K562 (cell line): ENCODE measurements at regions of chr12 and their contacts with region 1.

Region 1: DNA sequence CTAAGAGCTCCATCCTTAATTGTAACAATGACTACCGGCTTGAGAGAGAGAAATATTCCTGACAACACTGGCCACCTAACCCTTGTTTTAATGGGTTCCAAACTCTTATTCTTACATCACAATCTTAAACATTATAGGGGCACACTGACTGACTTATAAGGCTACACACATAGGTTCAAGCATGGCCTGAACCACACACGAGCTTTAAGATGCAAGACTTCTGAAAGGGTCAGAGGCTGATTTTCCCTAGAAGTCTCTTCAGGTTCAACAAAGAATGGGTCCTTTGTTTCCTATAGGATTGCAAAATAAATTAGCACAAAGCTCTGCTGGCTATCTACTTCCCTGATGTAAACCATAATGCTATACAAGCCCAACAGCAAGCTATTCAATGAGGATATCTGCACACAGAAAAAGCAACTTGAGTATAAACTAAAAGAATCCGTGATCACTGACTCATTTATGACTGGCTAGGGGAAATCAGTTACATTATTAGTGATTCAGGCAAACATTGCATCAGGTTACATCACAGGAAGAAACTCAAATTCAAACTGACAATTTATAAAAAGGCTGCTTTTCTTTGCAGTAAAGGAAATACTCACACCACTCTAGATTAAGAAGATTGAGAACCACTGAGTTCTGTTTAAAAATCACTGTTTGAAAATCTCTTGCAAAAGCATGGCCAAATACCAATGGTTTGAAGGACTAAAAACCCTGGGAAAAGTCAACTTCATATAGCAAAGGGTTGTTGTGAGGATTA is 8.5 kb downstream of the BTG1 start:
- DNase-seq: no peak
- ATAC-seq: no peak
- H3K4me3 ChIP-seq: no peak overlapping the region
- H3K27ac ChIP-seq: no peak overlapping the region
- H3K4me1 ChIP-seq: peaks cover 0 to 44% of the 10 kb centered on the region in 2 experiments; a peak in 4 of 5 replicates
- H3K27me3 ChIP-seq: no peaks in the 10 kb centered on the region
- CTCF ChIP-seq: no peak
- EP300 ChIP-seq: peak; percentile 59; the same call in 1 of the 2 replicates
- POLR2A ChIP-seq: no peak
- RAD21 ChIP-seq: no peak

Region 2: GRCh38 chr12:92002673-92003382 is 134.3 kb before region 1 on chr12:
- CTCF ChIA-PET with region 1: no interaction called
- POLR2A ChIA-PET with region 1: no interaction called
- in situ Hi-C with region 1: no loop called
- intact Hi-C with region 1: loop called (anchors 1 kb)
- DNase-seq: peak; percentile 15 to 78 (median 43)
- ATAC-seq: peak; percentile 85
- H3K4me3 ChIP-seq: no peak overlapping the region
- H3K27ac ChIP-seq: peak overlapping the region; percentile 65
- H3K4me1 ChIP-seq: peaks cover 4 to 31% of the 10 kb centered on the region in 2 experiments; a peak in 4 of 5 replicates
- H3K27me3 ChIP-seq: no peaks in the 10 kb centered on the region
- CTCF ChIP-seq: no peak
- EP300 ChIP-seq: peak; percentile 86; the same call in 1 of the 2 replicates
- POLR2A ChIP-seq: no peak
- RAD21 ChIP-seq: 0 out of 4 replicates have a peak, but pooled peaks of 1 of the 2 experiments have one; percentile 13

Region 3: DNA sequence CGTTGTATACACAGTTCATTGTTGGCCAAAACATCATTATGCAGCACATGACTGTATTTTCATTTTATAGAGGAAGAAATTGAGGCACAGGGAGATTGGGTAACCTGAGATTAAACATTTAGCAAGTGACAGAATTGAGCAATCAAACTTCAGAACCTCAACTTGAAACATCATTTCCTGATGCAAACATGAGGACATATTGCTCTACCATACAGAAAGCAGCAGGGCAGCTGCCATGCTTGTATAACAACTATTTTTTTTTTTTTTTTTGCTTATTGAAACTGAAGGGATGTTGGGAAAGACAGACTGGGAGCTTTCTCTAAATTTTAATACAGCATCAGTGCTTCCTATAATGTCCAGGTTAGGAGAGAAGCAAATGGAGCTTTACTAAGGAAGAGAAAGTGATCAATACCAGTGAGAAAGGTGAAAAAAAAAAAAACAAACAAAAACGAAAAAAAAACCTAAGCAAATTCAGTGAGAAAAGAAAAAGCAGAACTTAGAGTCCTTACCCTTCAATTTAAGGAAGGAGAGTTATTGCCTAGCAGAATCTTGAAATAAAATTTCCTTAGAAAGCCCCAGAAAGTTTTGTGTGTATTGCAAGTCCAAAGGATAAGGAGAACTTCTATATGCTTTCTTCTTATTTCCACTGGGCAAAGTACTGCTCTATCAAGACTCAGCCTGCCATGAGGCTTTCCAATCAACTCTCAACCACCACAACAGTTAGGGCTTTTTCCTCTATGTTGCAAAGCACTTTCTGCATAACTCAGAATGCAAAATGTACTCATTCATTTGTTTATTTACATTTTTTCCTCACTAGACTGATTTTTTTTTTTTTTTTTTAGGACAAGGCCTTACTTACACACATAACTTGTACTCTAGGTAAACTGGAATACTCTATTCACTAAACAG is 13.1 kb before region 1 on chr12:
- CTCF ChIA-PET with region 1: no interaction called
- POLR2A ChIA-PET with region 1: interaction called, 14 read pairs
- in situ Hi-C with region 1: no loop called
- intact Hi-C with region 1: no loop called
- DNase-seq: no peak
- ATAC-seq: no peak
- H3K4me3 ChIP-seq: no peak overlapping the region
- H3K27ac ChIP-seq: no peak overlapping the region
- H3K4me1 ChIP-seq: peaks cover 0 to 8% of the 10 kb centered on the region in 2 experiments; a peak in 2 of 5 replicates
- H3K27me3 ChIP-seq: no peaks in the 10 kb centered on the region
- CTCF ChIP-seq: no peak
- EP300 ChIP-seq: no peak
- POLR2A ChIP-seq: no peak
- RAD21 ChIP-seq: no peak